Right cardiac atrium (tissue), 5 donors: ENCODE measurements at regions of chr19 and their contacts with region 1.

Region 1: DNA sequence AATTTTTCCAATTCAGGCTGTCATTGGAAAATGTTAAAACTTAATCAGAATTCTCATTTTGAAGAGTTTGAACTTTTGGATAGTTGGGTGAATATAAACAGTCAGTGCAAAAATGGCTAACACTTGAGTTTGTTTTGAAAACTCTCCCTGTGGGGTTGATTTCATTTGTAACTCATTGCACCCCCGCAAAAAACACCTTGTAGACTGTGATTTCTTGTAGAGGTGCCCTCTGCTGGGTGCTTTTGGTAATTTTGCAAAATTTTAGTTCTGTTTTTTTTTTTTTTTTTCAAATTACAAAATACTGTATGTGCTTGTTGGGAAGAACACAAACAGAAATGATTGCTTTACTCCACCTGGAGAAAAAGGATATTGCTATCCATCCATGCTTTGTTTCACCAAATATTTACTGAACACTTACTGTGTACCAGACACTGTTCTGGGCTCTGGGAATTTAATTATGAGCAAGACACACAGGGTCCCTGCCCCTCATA is 28.2 kb upstream of the GPI start:
- DNase-seq: no peak
- ATAC-seq: no peak
- H3K4me3 ChIP-seq: no peak overlapping the region
- H3K27ac ChIP-seq: no peak overlapping the region
- H3K4me1 ChIP-seq: no peaks in the 10 kb centered on the region
- H3K27me3 ChIP-seq: no peaks in the 10 kb centered on the region

Region 2: DNA sequence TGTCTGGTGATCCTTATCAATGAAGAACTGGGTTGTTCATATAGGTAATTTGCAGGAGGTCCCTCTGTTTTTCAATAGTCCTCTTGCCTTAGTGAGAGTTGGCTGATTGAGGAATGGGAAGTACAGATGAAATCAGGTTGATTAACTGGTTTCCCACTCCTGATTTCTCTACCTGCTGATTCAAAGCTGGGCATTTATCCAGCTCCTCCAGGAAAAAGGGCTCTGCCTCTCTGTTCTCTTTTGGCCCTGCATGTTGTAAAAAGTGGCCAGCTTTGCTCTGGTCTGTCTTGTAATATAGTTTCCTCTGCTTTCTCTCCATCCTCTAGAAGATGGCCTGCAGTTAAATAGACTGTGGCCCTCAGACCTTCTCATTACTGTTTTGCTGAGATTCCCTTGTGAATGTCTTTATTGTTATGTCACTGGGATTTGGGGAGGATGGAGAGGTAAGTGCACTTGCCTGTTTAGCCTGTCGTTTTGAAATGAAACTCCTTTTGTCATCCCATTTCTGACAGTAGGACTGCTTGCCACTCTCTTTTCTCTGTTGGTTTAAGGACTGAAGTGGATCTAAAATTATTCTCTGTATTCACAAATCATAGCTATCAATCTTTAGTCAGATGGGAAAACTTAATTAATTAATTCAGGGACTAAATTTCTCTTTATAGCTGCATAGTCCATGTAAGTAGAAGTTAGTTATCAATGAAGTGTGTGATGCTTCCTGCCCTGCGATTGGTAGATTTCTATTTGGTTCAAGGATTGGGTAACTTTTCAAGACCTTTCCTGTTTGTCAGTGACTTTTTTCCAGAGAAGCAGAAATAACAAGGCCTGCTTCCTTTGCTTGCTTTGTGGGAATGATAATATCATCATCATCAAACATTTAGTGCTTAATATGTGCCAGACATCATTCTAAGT is 54.0 kb before region 1 on chr19:
- intact Hi-C with region 1: loop called in 1 of 4 experiments (anchors 10 kb)
- DNase-seq: no peak
- ATAC-seq: peak in 1 of 2 donors; percentile 39
- H3K4me3 ChIP-seq: no peak overlapping the region
- H3K27ac ChIP-seq: no peak overlapping the region
- H3K4me1 ChIP-seq: peaks cover 2% of the 10 kb centered on the region
- H3K27me3 ChIP-seq: no peaks in the 10 kb centered on the region